ENCODE measurements at regions of chr5 and their contacts with region 1.

Region 1: GRCh38 chr5:172479044-172479783 is 24.9 kb upstream of the SH3PXD2B start:
- DNase-seq: peak; percentile 77 to 82
- H3K4me3 ChIP-seq: no peak overlapping the region
- H3K27ac ChIP-seq: peak overlapping the region in 1 of 3 donors; percentile 3
- H3K4me1 ChIP-seq: no peaks in the 10 kb centered on the region
- H3K27me3 ChIP-seq: no peaks in the 10 kb centered on the region
- CTCF ChIP-seq: peak; percentile 44 to 95 (median 70)
- POLR2A ChIP-seq: no peak

Region 2: GRCh38 chr5:172533399-172534228 is 54.4 kb after region 1 on chr5:
- intact Hi-C with region 1: no loop called
- DNase-seq: no peak
- H3K4me3 ChIP-seq: no peak overlapping the region
- H3K27ac ChIP-seq: peak overlapping the region in 1 of 3 donors; percentile 1
- H3K4me1 ChIP-seq: no peaks in the 10 kb centered on the region
- H3K27me3 ChIP-seq: no peaks in the 10 kb centered on the region
- CTCF ChIP-seq: no peak
- POLR2A ChIP-seq: no peak

Region 3: DNA sequence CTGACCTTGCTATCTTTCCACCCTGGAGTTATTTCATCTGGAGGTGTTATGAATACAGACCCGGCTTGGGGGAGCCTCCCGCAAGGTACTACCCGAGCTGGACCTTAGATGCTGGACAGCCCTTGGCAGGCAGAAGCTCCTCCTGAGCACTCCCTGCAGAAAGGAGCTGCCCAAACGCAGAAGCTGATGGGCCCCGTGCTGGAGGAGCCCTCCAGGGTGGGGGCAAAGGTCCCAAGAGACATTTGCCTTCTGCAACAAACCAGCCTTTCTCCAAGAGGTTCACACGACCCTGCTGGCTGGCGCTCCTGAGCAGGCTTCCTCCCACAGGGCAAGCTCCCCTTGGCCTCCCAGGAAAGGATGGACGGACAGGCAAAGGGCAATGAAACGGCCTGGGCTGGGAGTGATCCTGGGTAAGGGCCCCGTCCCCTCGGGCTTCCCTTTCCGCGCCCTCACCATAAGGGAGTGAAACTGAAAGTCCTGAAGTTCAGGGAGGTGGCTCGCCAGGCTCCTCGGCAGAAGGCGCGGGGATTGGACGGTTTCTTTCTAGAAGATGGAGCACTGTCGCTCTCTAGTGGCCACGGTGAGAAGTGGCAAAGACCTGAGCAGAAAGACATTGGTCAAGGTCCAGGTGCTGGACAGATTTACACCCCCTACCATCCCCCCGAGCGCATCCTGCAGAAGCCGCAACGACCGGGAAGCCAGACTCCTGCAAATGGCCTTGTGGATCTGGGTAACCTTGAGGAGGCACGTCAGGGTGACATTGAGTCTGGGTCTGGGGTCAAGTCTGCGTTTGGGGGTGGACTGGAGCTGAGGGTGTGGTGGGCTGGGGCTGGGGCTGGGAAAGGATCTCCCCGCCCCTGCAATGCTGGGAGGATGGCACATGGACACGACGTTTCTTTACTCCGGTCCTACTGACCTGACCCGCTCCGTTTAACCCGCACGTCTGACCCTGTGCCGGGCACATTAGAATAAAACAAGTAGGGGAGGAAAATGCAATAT is 218.2 kb after region 1 on chr5:
- intact Hi-C with region 1: loop called (anchors 5 kb)
- DNase-seq: peak; percentile 87 to 90
- H3K4me3 ChIP-seq: peak overlapping the region in 2 of 3 donors; percentile 52 to 57
- H3K27ac ChIP-seq: peak overlapping the region; percentile 30 to 58 (median 58)
- H3K4me1 ChIP-seq: peaks cover 0 to 22% of the 10 kb centered on the region in 2 donors
- H3K27me3 ChIP-seq: no peaks in the 10 kb centered on the region
- CTCF ChIP-seq: peak; percentile 85 to 91 (median 90)
- POLR2A ChIP-seq: peak in 1 of 2 donors; percentile 35

Measured in thyroid gland (tissue), 4 donors.